ENCODE measurements at regions of chr19 and their contacts with region 1.

Region 1: DNA sequence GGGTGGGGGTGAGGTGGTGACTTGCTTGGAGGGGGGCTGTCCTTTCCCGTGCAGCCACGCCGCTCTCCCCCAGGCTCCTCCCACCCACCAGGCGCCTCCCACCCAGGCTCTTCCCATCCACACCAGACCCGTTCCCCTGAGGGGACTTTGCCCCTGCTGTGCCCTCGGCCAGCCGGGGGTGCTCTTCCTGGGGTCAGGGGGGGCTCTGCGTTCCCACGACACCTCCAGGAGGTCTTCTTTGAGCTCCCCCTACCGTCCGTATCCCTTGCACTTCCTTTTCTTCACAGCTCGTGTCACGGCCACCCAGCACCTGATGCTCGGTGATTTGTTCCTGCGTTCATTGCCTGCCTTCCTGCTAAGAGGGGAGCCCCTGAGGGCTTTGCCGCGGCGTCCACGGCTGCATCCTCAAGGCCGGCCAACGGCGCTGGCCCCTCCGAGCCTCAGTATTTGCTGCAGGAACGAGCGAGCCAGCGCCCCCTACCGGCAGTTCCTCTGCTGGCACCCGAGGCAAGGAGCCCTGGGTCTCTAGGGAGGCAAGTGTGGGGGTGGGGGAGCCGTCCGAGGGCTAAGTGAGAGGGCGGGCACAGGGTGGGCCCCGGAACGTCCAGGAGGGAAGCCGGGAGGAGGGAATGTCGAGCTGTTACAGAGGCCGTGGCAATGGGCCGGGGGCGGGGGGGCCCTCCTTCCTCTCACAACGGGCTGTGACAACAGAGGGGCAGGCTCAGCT is 11.8 kb downstream of the LRRC4B start:
- DNase-seq: peak; percentile 96
- H3K4me3 ChIP-seq: peak overlapping the region; percentile 56 to 60
- H3K27ac ChIP-seq: peak overlapping the region in 1 of 2 experiments; percentile 59; a peak in 1 of 4 replicates
- H3K4me1 ChIP-seq: peaks cover 0 to 20% of the 10 kb centered on the region in 2 experiments; a peak in 1 of 4 replicates
- H3K27me3 ChIP-seq: no peaks in the 10 kb centered on the region
- CTCF ChIP-seq: peak; percentile 98
- EP300 ChIP-seq: no peak
- RAD21 ChIP-seq: peak; percentile 44

Region 2: DNA sequence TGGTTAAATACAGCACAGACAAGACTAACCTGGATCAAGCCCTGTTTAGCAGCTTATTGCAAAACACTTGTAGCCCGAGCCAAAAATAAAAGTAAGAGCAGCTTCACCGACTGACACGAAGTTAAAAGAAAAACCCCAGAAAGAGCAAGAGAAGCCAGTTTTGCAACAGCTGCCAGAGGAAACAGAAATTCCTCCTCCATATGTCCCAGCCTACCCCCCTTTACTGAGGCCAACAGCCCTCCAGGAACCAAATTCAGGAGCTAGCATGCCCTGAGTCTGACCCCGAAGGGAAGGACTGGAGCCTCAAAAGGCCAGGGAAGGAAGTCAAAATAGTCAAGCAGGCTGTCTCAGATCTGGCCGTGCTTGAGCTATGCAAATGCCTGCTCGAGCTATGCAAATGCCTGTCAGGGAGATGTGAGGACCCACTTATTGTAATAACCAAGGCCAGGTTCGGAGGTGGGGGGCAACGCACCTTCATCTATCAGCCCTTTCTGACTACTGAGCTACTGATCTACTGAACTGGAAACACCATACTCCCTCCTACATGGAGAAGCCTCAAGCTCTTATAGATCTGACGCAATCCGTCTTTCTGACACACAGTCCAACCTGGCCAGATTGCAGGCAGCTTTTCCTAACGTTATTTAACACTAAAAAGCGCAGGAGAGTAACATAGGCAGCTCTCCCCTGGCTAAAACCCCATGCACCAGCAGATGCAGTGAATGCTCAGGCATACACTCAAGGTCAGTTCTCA is 602.2 kb before region 1 on chr19:
- CTCF ChIA-PET with region 1: no interaction called
- POLR2A ChIA-PET with region 1: no interaction called
- DNase-seq: no peak
- H3K4me3 ChIP-seq: no peak overlapping the region
- H3K27ac ChIP-seq: no peak overlapping the region
- H3K4me1 ChIP-seq: no peaks in the 10 kb centered on the region
- H3K27me3 ChIP-seq: peaks cover 67% of the 10 kb centered on the region
- CTCF ChIP-seq: no peak
- EP300 ChIP-seq: no peak
- RAD21 ChIP-seq: no peak

Region 3: DNA sequence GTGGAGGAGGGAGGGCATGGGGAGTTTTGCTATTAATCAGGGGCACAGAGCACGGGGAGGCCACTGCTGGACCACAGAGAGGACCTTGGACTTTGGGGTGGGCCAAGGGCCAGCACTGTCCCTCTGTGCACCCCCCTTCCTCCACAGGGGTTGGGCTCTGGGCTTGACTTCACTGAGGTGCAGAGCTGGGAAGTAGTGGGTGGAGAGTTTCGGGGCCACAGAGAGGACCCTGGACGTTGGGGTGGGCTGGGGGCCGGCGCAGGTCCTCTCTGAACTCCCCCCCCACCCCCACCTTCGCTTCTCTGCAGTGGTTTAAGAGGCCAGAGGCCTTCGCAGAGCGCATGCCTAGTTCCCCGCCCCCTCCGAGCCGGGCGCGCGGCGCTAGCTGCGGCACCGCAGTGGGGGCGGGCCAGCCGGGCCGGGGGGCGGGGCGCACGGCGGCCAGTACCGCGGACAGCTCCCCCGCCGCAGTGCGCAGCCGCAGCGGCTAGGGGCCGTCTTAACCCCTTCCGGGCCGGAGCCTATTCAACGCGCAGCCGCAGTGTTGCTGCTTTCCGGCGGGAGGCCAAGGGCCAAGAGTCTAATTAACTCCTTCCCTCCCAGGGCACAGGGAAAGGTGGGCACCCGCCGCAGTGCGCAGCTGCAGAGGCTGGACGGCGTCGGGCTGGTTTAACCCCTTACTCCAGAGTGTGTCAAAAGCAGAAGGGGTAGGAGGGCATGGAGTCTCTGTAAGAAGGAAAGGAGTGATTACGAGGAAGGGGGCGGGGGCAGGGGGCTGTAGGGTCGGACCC is 230.9 kb before region 1 on chr19:
- CTCF ChIA-PET with region 1: no interaction called
- POLR2A ChIA-PET with region 1: no interaction called
- DNase-seq: peak; percentile 100
- H3K4me3 ChIP-seq: peak overlapping the region in 1 of 2 experiments; percentile 37; a peak in 1 of 4 replicates
- H3K27ac ChIP-seq: peak overlapping the region in 1 of 2 experiments; percentile 50; a peak in 2 of 4 replicates
- H3K4me1 ChIP-seq: peaks cover 0 to 28% of the 10 kb centered on the region in 2 experiments; a peak in 1 of 4 replicates
- H3K27me3 ChIP-seq: peaks cover 16% of the 10 kb centered on the region; the same call in 1 of the 2 replicates
- CTCF ChIP-seq: no peak
- EP300 ChIP-seq: no peak
- RAD21 ChIP-seq: no peak

Region 4: DNA sequence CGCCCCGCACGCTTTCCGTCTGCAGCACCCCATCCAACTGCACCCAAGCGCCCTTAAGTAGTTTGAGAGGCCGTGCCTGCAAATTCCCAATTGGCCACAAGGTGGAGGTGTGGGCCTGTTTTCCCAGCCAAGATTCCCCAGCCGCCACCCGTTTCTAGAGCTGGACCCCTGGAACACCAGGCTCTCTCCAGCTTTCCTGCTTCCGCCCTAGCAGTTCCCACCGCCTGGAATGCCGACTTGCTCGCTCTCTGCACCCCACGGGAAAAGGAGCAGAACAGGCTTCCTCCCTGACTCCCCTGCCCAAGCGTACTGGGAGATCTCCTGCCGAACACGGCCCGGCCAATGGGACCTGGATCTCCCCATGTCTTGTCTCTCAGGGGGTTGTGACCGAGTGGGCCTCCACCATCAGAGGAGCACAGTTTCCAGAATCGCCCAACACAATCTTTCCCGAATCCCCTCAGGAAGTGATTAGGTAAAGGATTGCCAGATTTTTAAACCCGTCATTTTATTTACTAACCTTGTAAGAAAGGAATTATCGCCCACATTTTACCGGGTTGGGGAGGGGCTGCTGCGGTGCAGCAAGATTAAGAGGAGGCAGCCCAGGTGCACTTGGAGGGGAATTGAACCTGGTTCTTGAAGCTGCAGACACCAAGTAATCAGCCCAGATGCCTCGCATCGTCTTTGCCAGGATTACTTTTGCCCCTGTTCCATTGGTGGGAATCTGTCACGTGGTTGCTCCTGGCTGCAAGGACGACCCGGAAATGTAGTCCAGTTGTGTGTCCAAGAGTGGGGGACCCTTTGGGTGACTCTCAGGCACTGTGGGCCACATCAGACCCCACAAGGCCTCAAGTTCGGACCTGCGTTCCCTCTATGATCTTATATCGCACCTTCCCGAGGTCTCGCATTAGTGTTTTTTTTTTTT is 187.5 kb before region 1 on chr19:
- CTCF ChIA-PET with region 1: interaction called, 13 read pairs
- POLR2A ChIA-PET with region 1: no interaction called
- DNase-seq: peak; percentile 84
- H3K4me3 ChIP-seq: peak overlapping the region; percentile 59 to 67
- H3K27ac ChIP-seq: peak overlapping the region; percentile 36 to 80
- H3K4me1 ChIP-seq: peaks cover 0 to 2% of the 10 kb centered on the region in 2 experiments; a peak in 1 of 4 replicates
- H3K27me3 ChIP-seq: no peaks in the 10 kb centered on the region
- CTCF ChIP-seq: peak; percentile 76
- EP300 ChIP-seq: no peak
- RAD21 ChIP-seq: peak; percentile 87

Region 5: GRCh38 chr19:50518091-50519005 is 38.1 kb before region 1 on chr19:
- CTCF ChIA-PET with region 1: interaction called, 54 read pairs
- POLR2A ChIA-PET with region 1: no interaction called
- DNase-seq: no peak
- H3K4me3 ChIP-seq: no peak overlapping the region
- H3K27ac ChIP-seq: no peak overlapping the region
- H3K4me1 ChIP-seq: peaks cover 0 to 20% of the 10 kb centered on the region in 2 experiments; a peak in 1 of 4 replicates
- H3K27me3 ChIP-seq: no peaks in the 10 kb centered on the region
- CTCF ChIP-seq: peak; percentile 27; the same call in 1 of the 2 replicates
- EP300 ChIP-seq: no peak
- RAD21 ChIP-seq: no peak

Region 6: GRCh38 chr19:50537762-50538230 is 18.6 kb before region 1 on chr19:
- CTCF ChIA-PET with region 1: interaction called, 170 read pairs
- POLR2A ChIA-PET with region 1: no interaction called
- DNase-seq: peak; percentile 93
- H3K4me3 ChIP-seq: peak overlapping the region in 1 of 2 experiments; percentile 22; a peak in 1 of 4 replicates
- H3K27ac ChIP-seq: no peak overlapping the region
- H3K4me1 ChIP-seq: peaks cover 0 to 3% of the 10 kb centered on the region in 2 experiments; a peak in 1 of 4 replicates
- H3K27me3 ChIP-seq: no peaks in the 10 kb centered on the region
- CTCF ChIP-seq: peak; percentile 87
- EP300 ChIP-seq: no peak
- RAD21 ChIP-seq: peak; percentile 82

Region 7: GRCh38 chr19:50580970-50581634 is 24.7 kb after region 1 on chr19:
- CTCF ChIA-PET with region 1: interaction called, 12 read pairs
- POLR2A ChIA-PET with region 1: no interaction called
- DNase-seq: no peak
- H3K4me3 ChIP-seq: no peak overlapping the region
- H3K27ac ChIP-seq: no peak overlapping the region
- H3K4me1 ChIP-seq: no peaks in the 10 kb centered on the region
- H3K27me3 ChIP-seq: no peaks in the 10 kb centered on the region
- CTCF ChIP-seq: no peak
- EP300 ChIP-seq: no peak
- RAD21 ChIP-seq: no peak